ENCODE measurements at regions of chr19 and their contacts with region 1.

Region 1: GRCh38 chr19:16111160-16111908 is at the start of gene RAB8A:
- DNase-seq: peak; percentile 98 to 99
- H3K4me3 ChIP-seq: peak within 1 kb of the TSS; percentile 96 to 97
- H3K27ac ChIP-seq: peak within 1 kb of the TSS; percentile 88 to 91
- H3K4me1 ChIP-seq: peaks cover 16 to 22% of the 10 kb centered on the region in 2 donors
- H3K27me3 ChIP-seq: no peaks in the 10 kb centered on the region
- CTCF ChIP-seq: peak; percentile 94 to 100 (median 94)
- total RNA-seq, gene RAB8A: 35.1 TPM

Region 2: GRCh38 chr19:16041299-16041990 is 69.9 kb before region 1 on chr19:
- intact Hi-C with region 1: loop called (anchors 1 kb)
- DNase-seq: peak in 1 of 2 donors; percentile 91
- H3K4me3 ChIP-seq: peak overlapping the region in 1 of 2 donors; percentile 49
- H3K27ac ChIP-seq: peak overlapping the region; percentile 55 to 80
- H3K4me1 ChIP-seq: peaks cover 3 to 12% of the 10 kb centered on the region in 2 donors
- H3K27me3 ChIP-seq: no peaks in the 10 kb centered on the region
- CTCF ChIP-seq: peak; percentile 96 to 99 (median 96)

Region 3: GRCh38 chr19:16153582-16154336 is 42.4 kb after region 1 on chr19:
- intact Hi-C with region 1: no loop called
- DNase-seq: no peak
- H3K4me3 ChIP-seq: no peak overlapping the region
- H3K27ac ChIP-seq: no peak overlapping the region
- H3K4me1 ChIP-seq: no peaks in the 10 kb centered on the region
- H3K27me3 ChIP-seq: no peaks in the 10 kb centered on the region
- CTCF ChIP-seq: no peak

Region 4: GRCh38 chr19:16197622-16198369 is 86.5 kb after region 1 on chr19 and contains the start of gene AP1M1:
- intact Hi-C with region 1: loop called (anchors 5 kb)
- DNase-seq: peak; percentile 91 to 99
- H3K4me3 ChIP-seq: peak within 1 kb of the TSS; percentile 87 to 93
- H3K27ac ChIP-seq: peak within 1 kb of the TSS; percentile 84
- H3K4me1 ChIP-seq: peaks cover 3 to 25% of the 10 kb centered on the region in 2 donors
- H3K27me3 ChIP-seq: no peaks in the 10 kb centered on the region
- CTCF ChIP-seq: no peak
- total RNA-seq, gene AP1M1: 162 TPM

Measured in ascending aorta (tissue), 2 donors.